ENCODE measurements at regions of chr6 and their contacts with region 1.

Region 1: DNA sequence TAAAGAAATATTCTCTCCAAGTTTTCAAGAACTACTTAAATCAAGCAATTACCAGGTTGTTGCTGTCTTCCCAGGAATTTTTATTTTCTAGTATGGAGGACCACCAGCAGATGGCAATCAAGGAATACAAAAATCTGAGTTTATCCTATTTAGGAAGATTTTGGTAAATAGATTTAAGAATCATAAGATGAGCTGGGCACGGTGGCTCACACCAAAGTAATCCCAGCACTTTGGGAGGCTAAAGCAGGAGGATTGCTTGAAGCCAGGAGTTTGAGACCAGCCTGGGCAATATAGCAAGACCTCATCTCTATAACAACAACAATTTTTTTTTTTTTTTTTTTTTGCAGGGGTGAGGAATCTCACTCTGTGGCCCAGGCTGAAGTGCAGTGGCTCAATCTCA is 19.3 kb upstream of the SEC63 start:
- DNase-seq: peak in 1 of 2 experiments; percentile 42
- ATAC-seq: peak in 1 of 2 experiments; percentile 42; a peak in 2 of 6 replicates
- H3K4me3 ChIP-seq: no peak overlapping the region
- H3K27ac ChIP-seq: no peak overlapping the region
- H3K4me1 ChIP-seq: no peaks in the 10 kb centered on the region
- CTCF ChIP-seq: peak; percentile 58
- EP300 ChIP-seq: no peak
- POLR2A ChIP-seq: no peak
- RAD21 ChIP-seq: peak; percentile 62 to 73

Region 2: DNA sequence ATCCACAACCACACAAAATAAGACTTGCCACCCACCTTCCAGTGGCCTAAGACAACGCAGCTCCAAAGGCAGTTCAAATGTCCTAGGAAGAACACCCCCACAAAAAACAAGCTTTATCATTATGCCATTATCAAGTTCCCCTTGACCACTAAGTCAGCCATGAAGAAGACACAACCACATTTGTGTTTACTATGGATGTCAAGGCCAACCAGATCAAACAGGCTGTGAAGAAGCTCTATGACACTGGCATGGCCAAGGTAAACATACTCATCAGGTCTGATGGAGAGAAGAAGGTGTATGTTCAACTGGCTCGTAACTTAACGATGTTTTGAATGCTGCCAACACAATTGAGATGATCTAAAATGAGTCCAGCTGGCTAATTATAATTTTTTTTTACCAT is 45.4 kb before region 1 on chr6:
- CTCF ChIA-PET with region 1: no interaction called
- POLR2A ChIA-PET with region 1: no interaction called
- DNase-seq: no peak
- ATAC-seq: no peak
- H3K4me3 ChIP-seq: no peak overlapping the region
- H3K27ac ChIP-seq: no peak overlapping the region
- H3K4me1 ChIP-seq: 0 out of 3 replicates have a peak, but pooled peaks cover 3% of the 10 kb centered on the region
- CTCF ChIP-seq: no peak
- EP300 ChIP-seq: no peak
- POLR2A ChIP-seq: no peak
- RAD21 ChIP-seq: no peak

Region 3: DNA sequence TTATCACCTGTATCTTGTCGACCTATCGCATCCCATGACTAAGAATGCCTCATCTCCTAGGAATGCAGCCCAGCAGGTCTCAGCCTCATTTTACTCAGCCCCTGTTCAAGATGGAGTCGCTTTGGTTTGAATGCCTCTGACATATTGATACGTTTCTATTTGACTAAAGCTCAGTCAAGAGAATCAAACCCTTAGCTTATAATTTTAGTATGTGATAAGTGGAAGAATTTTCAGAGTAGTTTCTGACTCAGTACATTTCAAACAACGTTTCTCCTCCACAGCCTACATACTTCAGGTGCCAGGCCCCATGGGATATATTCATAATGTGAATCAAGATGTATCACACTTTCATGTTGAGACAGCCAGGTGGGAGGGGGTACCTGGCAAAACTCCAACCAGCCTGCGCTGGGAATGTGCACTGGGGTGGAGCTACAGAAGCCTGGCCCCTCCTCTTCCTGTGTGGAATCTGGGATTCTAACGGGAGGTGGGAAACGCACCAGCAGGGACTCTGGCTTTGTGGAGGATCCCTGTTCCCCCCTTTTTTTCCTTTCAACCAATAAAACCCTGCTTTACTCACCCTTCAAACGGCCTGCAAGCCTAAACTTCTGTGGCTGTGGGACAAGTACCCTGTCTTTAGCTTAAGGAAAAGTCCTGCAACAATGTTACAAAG is 12.5 kb before region 1 on chr6:
- CTCF ChIA-PET with region 1: interaction called, 15 read pairs
- POLR2A ChIA-PET with region 1: interaction called, 7 read pairs
- DNase-seq: no peak
- ATAC-seq: no peak
- H3K4me3 ChIP-seq: no peak overlapping the region
- H3K27ac ChIP-seq: no peak overlapping the region
- H3K4me1 ChIP-seq: no peaks in the 10 kb centered on the region
- CTCF ChIP-seq: no peak
- EP300 ChIP-seq: no peak
- POLR2A ChIP-seq: no peak
- RAD21 ChIP-seq: no peak

Region 4: DNA sequence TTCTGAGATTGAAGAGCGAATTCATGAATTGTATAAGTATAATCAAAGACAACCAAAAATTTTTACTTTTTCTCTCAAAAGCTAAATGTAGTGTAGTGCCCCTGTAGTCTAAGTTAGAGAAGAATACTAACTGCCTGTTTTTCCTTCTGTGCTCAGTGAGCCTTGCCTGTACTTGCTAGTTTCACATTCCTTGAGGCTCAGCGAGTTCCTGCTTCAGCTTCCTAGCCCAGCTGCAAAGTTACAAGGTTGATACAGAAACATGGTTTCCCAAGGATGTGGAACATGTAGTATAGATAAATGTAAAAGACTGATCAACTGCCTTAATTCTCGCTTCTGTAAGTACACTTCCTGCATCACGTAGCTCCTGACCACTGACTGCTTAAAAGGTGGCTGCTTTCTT is 13.8 kb after region 1 on chr6:
- CTCF ChIA-PET with region 1: interaction called, 28 read pairs
- POLR2A ChIA-PET with region 1: no interaction called
- DNase-seq: no peak
- ATAC-seq: no peak
- H3K4me3 ChIP-seq: no peak overlapping the region
- H3K27ac ChIP-seq: no peak overlapping the region
- H3K4me1 ChIP-seq: no peaks in the 10 kb centered on the region
- CTCF ChIP-seq: no peak
- EP300 ChIP-seq: no peak
- POLR2A ChIP-seq: no peak
- RAD21 ChIP-seq: no peak

Region 5: GRCh38 chr6:108002365-108003221 is 25.3 kb after region 1 on chr6:
- CTCF ChIA-PET with region 1: interaction called, 10 read pairs
- POLR2A ChIA-PET with region 1: no interaction called
- DNase-seq: peak; percentile 18 to 75
- ATAC-seq: peak; percentile 78 to 84
- H3K4me3 ChIP-seq: no peak overlapping the region
- H3K27ac ChIP-seq: peak overlapping the region; percentile 66 to 84
- H3K4me1 ChIP-seq: peaks cover 22% of the 10 kb centered on the region
- CTCF ChIP-seq: no peak
- EP300 ChIP-seq: no peak
- POLR2A ChIP-seq: no peak
- RAD21 ChIP-seq: no peak

Region 6: GRCh38 chr6:108052706-108053105 is 75.4 kb after region 1 on chr6:
- CTCF ChIA-PET with region 1: interaction called, 68 read pairs
- POLR2A ChIA-PET with region 1: no interaction called
- DNase-seq: no peak
- ATAC-seq: no peak
- H3K4me3 ChIP-seq: no peak overlapping the region
- H3K27ac ChIP-seq: no peak overlapping the region
- H3K4me1 ChIP-seq: no peaks in the 10 kb centered on the region
- CTCF ChIP-seq: no peak
- EP300 ChIP-seq: no peak
- POLR2A ChIP-seq: no peak
- RAD21 ChIP-seq: no peak

Region 7: GRCh38 chr6:108118810-108119768 is 141.8 kb after region 1 on chr6:
- CTCF ChIA-PET with region 1: no interaction called
- POLR2A ChIA-PET with region 1: no interaction called
- DNase-seq: no peak
- ATAC-seq: no peak
- H3K4me3 ChIP-seq: peak overlapping the region; percentile 46; the same call in 2 of the 3 replicates
- H3K27ac ChIP-seq: no peak overlapping the region
- H3K4me1 ChIP-seq: no peaks in the 10 kb centered on the region
- CTCF ChIP-seq: no peak
- EP300 ChIP-seq: no peak
- POLR2A ChIP-seq: no peak
- RAD21 ChIP-seq: no peak

Measured in A549 (cell line).